ENCODE measurements at regions of chr13 and their contacts with region 1.

Region 1: DNA sequence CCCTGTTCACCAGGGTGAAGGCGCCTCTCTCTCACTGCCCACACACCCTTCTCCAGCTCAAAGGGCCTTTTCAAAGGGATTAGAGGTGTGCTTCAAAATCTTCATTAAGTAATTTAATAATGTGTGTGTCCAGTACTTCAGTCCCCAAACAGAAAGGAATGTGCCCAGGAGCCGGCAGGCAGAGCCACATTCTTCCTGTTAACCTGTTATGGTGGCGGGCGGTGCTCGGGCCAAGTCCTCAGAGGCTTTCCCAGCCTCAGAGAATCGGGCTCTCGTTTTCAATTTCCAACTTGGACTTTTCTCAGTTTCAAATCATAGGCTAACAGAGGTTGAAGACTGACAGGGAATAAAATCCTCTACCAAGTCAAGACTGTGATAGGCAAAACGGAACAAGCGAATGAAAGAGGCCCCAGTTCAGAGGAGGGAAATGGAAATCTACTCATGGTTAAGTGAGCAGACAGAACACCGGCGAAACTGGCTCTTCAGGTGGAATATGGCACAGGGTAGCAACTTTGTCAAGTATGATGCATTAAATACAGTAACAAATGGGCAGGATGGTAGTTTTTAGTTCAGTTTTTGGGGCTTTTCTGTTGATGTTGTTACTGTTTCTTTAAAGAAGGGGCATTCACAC is 68.6 kb downstream of the FOXO1 start:
- DNase-seq: no peak
- ATAC-seq: no peak
- H3K4me3 ChIP-seq: no peak overlapping the region
- H3K4me3 Mint-ChIP-seq: peak overlapping the region; percentile 32
- H3K27ac ChIP-seq: peak overlapping the region; percentile 42 to 85
- H3K27ac Mint-ChIP-seq: peak overlapping the region; percentile 62
- H3K4me1 ChIP-seq: peaks cover 83 to 94% of the 10 kb centered on the region in 2 donors
- H3K4me1 Mint-ChIP-seq: peaks cover 88% of the 10 kb centered on the region
- H3K27me3 ChIP-seq: no peaks in the 10 kb centered on the region
- H3K27me3 Mint-ChIP-seq: no peaks in the 10 kb centered on the region
- CTCF ChIP-seq: no peak

Region 2: DNA sequence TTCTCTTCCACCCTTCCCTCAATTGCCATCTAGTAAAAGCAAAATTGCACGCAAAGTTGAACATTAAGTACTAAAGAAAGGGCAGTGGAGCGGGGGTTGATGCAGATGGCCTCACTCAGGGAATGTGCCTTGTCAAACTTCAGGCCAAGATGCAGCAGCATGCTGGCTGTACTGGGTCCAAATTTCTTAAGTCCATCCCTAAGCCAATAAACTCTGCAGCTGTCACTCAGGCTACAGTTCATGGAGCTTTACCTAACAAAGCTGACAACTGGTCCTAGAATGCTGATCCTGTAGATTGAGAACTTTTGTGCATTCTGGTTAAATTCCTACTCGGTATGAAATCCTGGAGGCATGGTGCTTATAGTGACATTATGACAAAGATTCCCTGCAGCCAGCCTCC is 19.8 kb before region 1 on chr13:
- CTCF ChIA-PET with region 1: no interaction called
- POLR2A ChIA-PET with region 1: interaction called, 3 read pairs
- intact Hi-C with region 1: loop called (anchors 2 kb)
- DNase-seq: no peak
- ATAC-seq: no peak
- H3K4me3 ChIP-seq: no peak overlapping the region
- H3K4me3 Mint-ChIP-seq: peak overlapping the region; percentile 42
- H3K27ac ChIP-seq: peak overlapping the region; percentile 77 to 83
- H3K27ac Mint-ChIP-seq: peak overlapping the region; percentile 77
- H3K4me1 ChIP-seq: peaks cover 93 to 94% of the 10 kb centered on the region in 2 donors
- H3K4me1 Mint-ChIP-seq: peaks cover 94% of the 10 kb centered on the region
- H3K27me3 ChIP-seq: no peaks in the 10 kb centered on the region
- H3K27me3 Mint-ChIP-seq: no peaks in the 10 kb centered on the region
- CTCF ChIP-seq: no peak

Region 3: GRCh38 chr13:40629678-40630384 is 32.0 kb after region 1 on chr13:
- CTCF ChIA-PET with region 1: no interaction called
- POLR2A ChIA-PET with region 1: no interaction called
- intact Hi-C with region 1: no loop called
- DNase-seq: peak; percentile 68
- ATAC-seq: peak; percentile 73
- H3K4me3 ChIP-seq: peak overlapping the region in 2 of 5 experiments; percentile 6 to 37
- H3K4me3 Mint-ChIP-seq: peak overlapping the region; percentile 66
- H3K27ac ChIP-seq: peak overlapping the region; percentile 74 to 80
- H3K27ac Mint-ChIP-seq: peak overlapping the region; percentile 80
- H3K4me1 ChIP-seq: peaks cover 69 to 76% of the 10 kb centered on the region in 2 donors
- H3K4me1 Mint-ChIP-seq: peaks cover 80% of the 10 kb centered on the region
- H3K27me3 ChIP-seq: no peaks in the 10 kb centered on the region
- H3K27me3 Mint-ChIP-seq: no peaks in the 10 kb centered on the region
- CTCF ChIP-seq: no peak